Activated CD4-positive, alpha-beta memory T cell treated with anti-CD3 and anti-CD28 coated beads for 36 hours (primary cell): ENCODE measurements at regions of chr9 and their contacts with region 1.

Region 1: GRCh38 chr9:93108291-93109041 is 12.4 kb downstream of the CARD19 start:
- DNase-seq: peak; percentile 82
- H3K4me3 Mint-ChIP-seq: no peak overlapping the region
- H3K27ac Mint-ChIP-seq: peak overlapping the region; percentile 77
- H3K4me1 Mint-ChIP-seq: peaks cover 55% of the 10 kb centered on the region
- H3K27me3 Mint-ChIP-seq: no peaks in the 10 kb centered on the region

Region 2: GRCh38 chr9:92808726-92809451 is 299.6 kb before region 1 on chr9:
- CTCF ChIA-PET with region 1: no interaction called
- POLR2A ChIA-PET with region 1: no interaction called
- intact Hi-C with region 1: no loop called
- DNase-seq: peak; percentile 76
- H3K4me3 Mint-ChIP-seq: peak overlapping the region; percentile 77
- H3K27ac Mint-ChIP-seq: no peak overlapping the region
- H3K4me1 Mint-ChIP-seq: peaks cover 15% of the 10 kb centered on the region
- H3K27me3 Mint-ChIP-seq: peaks cover 53% of the 10 kb centered on the region

Region 3: DNA sequence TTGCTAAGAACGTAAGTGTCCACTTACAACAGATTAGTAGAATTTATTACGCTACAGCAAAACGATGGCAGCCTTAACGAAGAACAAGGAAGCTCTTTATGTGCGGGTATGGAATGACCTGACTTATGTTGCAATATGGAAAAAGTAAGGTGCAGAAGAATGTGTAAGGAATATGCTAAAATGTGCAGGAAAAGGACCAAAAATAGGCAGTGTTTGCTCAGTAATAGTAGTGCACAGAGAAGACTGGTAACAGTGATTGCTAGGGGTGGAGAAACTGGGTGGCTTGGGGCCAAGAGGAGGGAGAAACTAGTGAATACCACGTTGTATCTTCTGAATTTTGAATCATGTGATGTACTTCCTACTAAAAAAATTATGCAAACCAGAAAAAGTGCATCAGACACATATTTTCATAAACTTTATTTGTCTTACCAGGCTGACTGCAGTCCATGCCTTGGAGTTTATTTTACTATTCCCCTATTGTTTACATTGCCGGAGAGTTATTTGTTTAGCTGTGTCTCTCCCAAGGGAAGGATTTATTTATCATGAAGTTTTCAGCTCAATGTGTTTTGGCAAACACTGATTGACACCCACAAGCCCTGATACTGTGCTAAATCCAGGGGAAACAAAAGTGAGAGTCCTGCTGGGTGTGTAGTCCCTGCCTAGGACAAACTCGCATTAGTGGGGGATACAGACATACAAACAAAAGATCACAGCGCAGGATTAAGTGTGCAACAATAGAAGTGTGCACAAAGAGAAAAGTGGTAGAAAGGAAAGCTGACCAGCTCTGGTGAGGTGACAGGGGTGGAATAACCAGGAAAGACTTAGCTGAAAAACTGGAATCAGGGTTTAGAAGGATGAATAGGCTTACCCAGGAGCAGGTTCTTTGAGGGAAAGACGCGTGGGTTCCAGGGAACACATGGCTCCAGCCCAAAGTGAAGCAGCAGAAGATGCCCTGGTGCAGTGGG is 196.7 kb before region 1 on chr9:
- CTCF ChIA-PET with region 1: no interaction called
- POLR2A ChIA-PET with region 1: no interaction called
- intact Hi-C with region 1: no loop called
- DNase-seq: no peak
- H3K4me3 Mint-ChIP-seq: no peak overlapping the region
- H3K27ac Mint-ChIP-seq: no peak overlapping the region
- H3K4me1 Mint-ChIP-seq: no peaks in the 10 kb centered on the region
- H3K27me3 Mint-ChIP-seq: no peaks in the 10 kb centered on the region

Region 4: GRCh38 chr9:92954049-92954861 is 154.2 kb before region 1 on chr9:
- CTCF ChIA-PET with region 1: interaction called, 13 read pairs
- POLR2A ChIA-PET with region 1: no interaction called
- intact Hi-C with region 1: no loop called
- DNase-seq: peak; percentile 94
- H3K4me3 Mint-ChIP-seq: peak overlapping the region; percentile 64
- H3K27ac Mint-ChIP-seq: peak overlapping the region; percentile 96
- H3K4me1 Mint-ChIP-seq: peaks cover 74% of the 10 kb centered on the region
- H3K27me3 Mint-ChIP-seq: no peaks in the 10 kb centered on the region

Region 5: DNA sequence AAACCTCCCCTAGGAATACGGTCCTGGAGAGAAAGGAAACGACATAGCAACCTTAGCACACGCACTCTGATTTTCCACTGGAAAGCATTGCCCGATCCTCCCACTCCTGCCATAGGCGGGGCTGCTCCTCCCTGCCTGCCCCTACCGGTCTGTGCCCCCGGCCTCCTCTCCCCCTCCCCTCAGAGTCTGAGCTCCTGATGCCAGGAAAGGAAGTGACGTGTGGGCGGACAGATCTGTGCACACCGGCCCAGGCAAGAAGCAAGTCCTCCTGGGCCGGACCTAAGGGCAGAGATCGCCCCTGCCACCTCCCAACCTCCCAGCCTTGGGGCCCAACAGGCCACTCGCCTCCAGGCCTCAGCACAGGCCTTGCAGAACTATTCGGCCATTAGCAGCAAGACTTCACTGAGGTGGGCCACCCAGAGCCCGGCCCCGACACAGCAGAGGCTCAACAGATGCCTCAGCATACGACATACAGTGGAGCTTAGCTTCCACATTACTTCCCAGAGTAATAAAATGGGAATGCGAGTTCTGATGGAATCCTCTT is 18.4 kb after region 1 on chr9:
- CTCF ChIA-PET with region 1: interaction called, 27 read pairs
- POLR2A ChIA-PET with region 1: no interaction called
- intact Hi-C with region 1: no loop called
- DNase-seq: peak; percentile 55
- H3K4me3 Mint-ChIP-seq: peak overlapping the region; percentile 8
- H3K27ac Mint-ChIP-seq: peak overlapping the region; percentile 80
- H3K4me1 Mint-ChIP-seq: peaks cover 53% of the 10 kb centered on the region
- H3K27me3 Mint-ChIP-seq: no peaks in the 10 kb centered on the region

Region 6: DNA sequence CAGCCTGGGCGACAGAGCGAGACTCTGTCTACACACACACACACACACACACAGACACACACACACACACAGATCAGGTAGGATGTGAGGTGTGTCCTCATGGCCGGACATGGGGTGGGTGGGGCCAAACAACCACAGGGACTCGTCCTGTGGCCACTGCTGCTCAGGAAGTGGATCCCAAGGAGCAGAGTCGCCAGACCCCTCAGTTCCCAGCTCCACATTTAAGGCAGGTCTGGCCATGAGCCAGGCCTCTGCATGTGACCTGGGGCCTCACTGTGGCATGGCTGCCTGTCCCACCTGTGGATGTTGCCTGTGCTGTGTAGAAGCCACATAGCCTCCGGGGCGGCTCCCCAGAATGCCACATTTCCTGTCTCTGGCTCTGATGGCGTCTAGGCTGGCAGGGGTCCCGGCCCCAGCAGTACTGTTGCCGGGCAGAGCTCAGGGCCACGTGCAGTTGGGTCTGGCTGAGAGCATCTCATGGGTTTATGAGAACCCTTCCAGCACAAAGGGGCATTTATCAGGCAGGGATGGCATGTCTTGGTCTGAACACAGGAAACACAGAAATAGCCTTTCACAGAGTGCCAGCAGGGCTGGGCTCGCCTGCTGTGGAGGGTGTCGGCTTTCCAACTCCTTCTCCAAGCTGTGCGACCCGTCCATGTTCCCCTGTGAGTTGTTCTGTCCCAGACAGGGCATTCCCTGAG is 35.5 kb after region 1 on chr9:
- CTCF ChIA-PET with region 1: interaction called, 7 read pairs
- POLR2A ChIA-PET with region 1: no interaction called
- intact Hi-C with region 1: loop called (anchors 2 kb)
- DNase-seq: peak; percentile 63
- H3K4me3 Mint-ChIP-seq: no peak overlapping the region
- H3K27ac Mint-ChIP-seq: peak overlapping the region; percentile 82
- H3K4me1 Mint-ChIP-seq: peaks cover 59% of the 10 kb centered on the region
- H3K27me3 Mint-ChIP-seq: no peaks in the 10 kb centered on the region

Region 7: GRCh38 chr9:93302551-93303257 is 194.2 kb after region 1 on chr9:
- CTCF ChIA-PET with region 1: interaction called, 15 read pairs
- POLR2A ChIA-PET with region 1: no interaction called
- intact Hi-C with region 1: loop called (anchors 1 kb)
- DNase-seq: peak; percentile 69
- H3K4me3 Mint-ChIP-seq: no peak overlapping the region
- H3K27ac Mint-ChIP-seq: no peak overlapping the region
- H3K4me1 Mint-ChIP-seq: peaks cover 2% of the 10 kb centered on the region
- H3K27me3 Mint-ChIP-seq: no peaks in the 10 kb centered on the region